Caco-2 (cell line): ENCODE measurements at regions of chr2 and their contacts with region 1.

Region 1: DNA sequence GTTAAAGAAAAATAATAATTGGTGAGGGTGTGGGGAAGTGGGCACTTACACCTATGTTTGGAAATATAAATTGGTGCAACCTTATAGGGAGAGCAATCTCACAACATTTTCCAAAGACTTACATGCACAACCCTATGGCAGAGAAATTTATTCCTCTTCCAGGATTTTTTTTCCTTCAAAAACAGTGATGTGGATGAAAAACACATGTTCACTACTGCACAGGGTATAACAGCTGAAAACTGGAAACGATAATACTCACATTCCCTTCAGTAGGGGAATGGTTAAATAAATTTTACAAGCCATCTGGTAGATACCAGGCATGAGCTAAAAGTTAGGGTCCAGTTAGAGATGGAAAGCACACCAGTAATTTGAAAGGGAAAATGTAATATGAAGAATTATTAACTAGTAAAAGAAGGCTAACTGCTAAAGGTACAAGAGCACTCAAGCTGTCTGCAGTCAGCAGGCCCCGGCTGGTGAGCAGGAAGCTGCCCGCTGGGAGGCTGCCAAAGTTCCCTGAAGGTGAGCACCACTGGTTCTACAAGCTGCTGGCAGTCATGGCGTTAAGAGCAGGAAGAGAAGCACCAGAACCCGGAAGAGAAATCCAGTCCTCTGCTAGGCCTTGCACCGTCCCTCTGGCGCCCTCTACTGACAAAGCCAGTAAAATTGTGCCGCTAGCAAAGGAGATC is 28.4 kb upstream of the CASP8 start:
- DNase-seq: peak; percentile 94 to 95
- H3K4me3 ChIP-seq: no peak overlapping the region
- H3K4me3 Mint-ChIP-seq: peak overlapping the region; percentile 98
- H3K27ac Mint-ChIP-seq: peak overlapping the region; percentile 70
- H3K4me1 ChIP-seq: peaks cover 6% of the 10 kb centered on the region
- H3K4me1 Mint-ChIP-seq: peaks cover 11% of the 10 kb centered on the region
- H3K27me3 ChIP-seq: no peaks in the 10 kb centered on the region
- H3K27me3 Mint-ChIP-seq: no peaks in the 10 kb centered on the region
- CTCF ChIP-seq: peak; percentile 91 to 93

Region 2: DNA sequence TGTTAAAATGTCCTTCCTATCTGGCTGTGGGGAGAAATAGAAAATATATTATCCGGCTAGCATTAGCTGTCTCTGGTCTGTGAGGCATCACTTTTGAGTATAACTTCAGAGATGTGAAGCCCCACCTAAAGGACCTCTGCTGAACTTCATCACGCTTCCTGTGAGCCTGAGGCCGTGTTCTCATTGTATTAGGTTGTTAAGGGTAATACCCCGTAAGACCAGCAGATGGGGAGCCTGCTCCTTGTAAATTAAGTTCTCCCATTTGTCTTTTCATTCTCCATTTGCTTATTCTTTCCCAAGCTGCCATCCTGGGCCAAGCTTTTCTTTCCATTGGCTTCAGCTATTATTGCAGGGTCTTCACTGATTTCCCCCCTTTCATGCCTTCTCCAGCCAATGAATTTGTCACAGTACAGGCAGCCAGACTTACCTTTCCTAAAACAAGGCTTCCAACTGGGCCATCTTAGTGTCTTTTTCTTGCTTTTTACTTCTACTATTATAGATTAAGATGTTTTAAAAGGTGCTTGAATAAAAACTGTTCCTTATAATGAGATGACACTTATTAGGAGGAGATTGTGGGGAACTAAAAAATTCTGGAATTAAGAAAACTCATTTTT is 330.4 kb before region 1 on chr2:
- CTCF ChIA-PET with region 1: interaction called, 6 read pairs
- POLR2A ChIA-PET with region 1: no interaction called
- intact Hi-C with region 1: loop called (anchors 1 kb)
- DNase-seq: peak; percentile 84 to 86
- H3K4me3 ChIP-seq: no peak overlapping the region
- H3K4me3 Mint-ChIP-seq: no peak overlapping the region
- H3K27ac Mint-ChIP-seq: no peak overlapping the region
- H3K4me1 ChIP-seq: no peaks in the 10 kb centered on the region
- H3K4me1 Mint-ChIP-seq: peaks cover 6% of the 10 kb centered on the region
- H3K27me3 ChIP-seq: no peaks in the 10 kb centered on the region
- H3K27me3 Mint-ChIP-seq: no peaks in the 10 kb centered on the region
- CTCF ChIP-seq: peak; percentile 85 to 90

Region 3: DNA sequence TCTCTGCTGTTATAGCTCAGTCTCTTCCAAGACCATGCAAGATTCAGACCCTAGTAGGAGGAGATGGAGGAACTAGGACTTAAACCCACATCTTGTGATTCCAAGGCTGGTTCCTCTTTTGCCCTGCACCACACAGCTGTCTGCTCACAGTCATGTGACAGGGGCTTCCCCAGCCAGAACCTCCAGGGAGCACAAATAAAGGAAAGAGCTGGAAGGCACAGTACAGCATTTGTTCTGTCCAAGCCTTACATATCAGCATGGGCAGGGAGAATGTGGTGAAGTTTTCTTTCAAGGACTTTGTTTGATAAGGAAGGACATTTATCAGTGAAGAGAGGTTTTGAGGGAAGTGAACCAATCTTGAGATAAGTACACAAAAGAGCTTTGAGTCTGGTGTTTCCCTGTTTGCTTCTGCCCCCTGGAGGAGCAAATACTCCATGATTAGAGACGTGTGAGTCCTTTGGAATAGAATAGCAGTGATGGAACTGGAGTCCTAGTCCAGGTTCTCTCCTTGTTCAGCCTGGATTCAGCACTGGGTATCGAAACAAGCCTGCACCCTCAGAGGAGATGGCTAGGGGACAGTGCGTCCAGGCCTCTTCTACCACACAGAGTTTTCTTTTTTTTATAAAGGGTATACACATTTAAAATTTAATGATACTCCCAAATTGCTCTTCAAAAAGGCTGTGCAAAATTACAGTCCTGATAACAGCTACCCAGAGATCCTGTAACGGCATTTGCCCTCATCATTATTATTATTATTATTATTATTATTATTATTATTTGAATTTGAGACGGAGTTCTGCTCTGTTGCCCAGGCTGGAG is 73.6 kb before region 1 on chr2:
- CTCF ChIA-PET with region 1: interaction called, 15 read pairs
- POLR2A ChIA-PET with region 1: interaction called, 3 read pairs
- intact Hi-C with region 1: loop called (anchors 1 kb)
- DNase-seq: peak; percentile 84 to 86
- H3K4me3 ChIP-seq: no peak overlapping the region
- H3K4me3 Mint-ChIP-seq: peak overlapping the region; percentile 40
- H3K27ac Mint-ChIP-seq: peak overlapping the region; percentile 86
- H3K4me1 ChIP-seq: peaks cover 12% of the 10 kb centered on the region
- H3K4me1 Mint-ChIP-seq: peaks cover 13% of the 10 kb centered on the region
- H3K27me3 ChIP-seq: no peaks in the 10 kb centered on the region
- H3K27me3 Mint-ChIP-seq: no peaks in the 10 kb centered on the region
- CTCF ChIP-seq: peak; percentile 71 to 84

Region 4: DNA sequence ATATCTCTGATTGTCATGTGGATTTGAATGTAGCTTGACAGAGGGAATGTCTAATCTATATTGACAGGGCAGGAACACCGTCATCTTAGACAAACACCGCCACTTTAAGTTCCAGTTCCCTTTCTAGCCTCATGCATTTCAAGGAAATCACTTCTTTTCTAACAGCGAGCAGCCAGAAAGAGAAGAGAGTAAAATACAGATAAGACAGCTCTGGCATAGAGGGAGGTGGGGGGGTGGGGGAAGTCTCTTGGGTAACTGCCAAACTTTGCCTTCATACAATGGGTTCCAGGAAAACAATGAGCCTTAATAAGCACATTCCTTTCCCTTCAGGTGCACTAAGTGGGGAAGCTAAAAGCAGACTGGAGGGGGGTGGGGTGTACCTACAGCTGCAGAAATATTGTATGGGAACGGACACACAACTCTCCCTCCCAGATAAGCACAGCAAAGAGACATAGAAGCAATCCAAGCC is 11.8 kb before region 1 on chr2:
- CTCF ChIA-PET with region 1: interaction called, 12 read pairs
- POLR2A ChIA-PET with region 1: interaction called, 4 read pairs
- intact Hi-C with region 1: no loop called
- DNase-seq: no peak
- H3K4me3 ChIP-seq: no peak overlapping the region
- H3K4me3 Mint-ChIP-seq: no peak overlapping the region
- H3K27ac Mint-ChIP-seq: no peak overlapping the region
- H3K4me1 ChIP-seq: peaks cover 7% of the 10 kb centered on the region; the same call in 1 of the 2 replicates
- H3K4me1 Mint-ChIP-seq: no peaks in the 10 kb centered on the region
- H3K27me3 ChIP-seq: no peaks in the 10 kb centered on the region
- H3K27me3 Mint-ChIP-seq: peaks cover 3% of the 10 kb centered on the region
- CTCF ChIP-seq: no peak

Region 5: DNA sequence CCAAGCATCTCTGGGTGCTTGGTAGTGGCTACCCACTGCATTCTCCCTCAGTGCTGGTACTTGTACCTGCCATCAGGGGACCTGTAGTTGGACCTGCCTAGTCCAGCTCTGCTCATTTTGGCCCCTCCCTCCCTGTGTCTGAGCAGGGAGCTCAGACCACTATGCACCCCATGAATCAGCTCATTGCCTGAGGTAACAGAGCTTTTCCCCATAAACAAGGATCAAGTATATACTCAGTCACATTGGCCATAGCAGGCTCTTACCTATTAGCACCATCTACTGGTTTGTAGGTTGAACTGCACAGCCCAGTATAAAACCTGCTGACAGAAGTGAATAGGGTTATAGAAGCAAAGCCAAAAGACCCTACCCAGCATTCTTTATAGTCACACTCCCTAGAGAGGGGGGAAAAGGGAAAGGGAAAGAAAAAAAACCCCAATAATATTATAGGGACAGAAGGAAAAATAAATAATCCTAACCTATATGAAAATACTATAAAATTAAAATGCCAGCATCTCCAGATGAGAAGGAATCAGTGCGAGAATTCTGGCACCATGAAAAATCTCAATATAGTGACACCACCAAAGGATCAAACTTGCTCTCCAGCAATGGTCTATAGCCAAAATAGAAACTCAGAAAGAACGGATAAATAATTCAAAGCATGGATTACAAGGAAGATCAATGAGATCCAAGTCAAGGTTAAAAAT is 132.1 kb after region 1 on chr2:
- CTCF ChIA-PET with region 1: interaction called, 8 read pairs
- POLR2A ChIA-PET with region 1: no interaction called
- intact Hi-C with region 1: loop called (anchors 1 kb)
- DNase-seq: peak in 1 of 2 experiments; percentile 40
- H3K4me3 ChIP-seq: no peak overlapping the region
- H3K4me3 Mint-ChIP-seq: no peak overlapping the region
- H3K27ac Mint-ChIP-seq: no peak overlapping the region
- H3K4me1 ChIP-seq: no peaks in the 10 kb centered on the region
- H3K4me1 Mint-ChIP-seq: no peaks in the 10 kb centered on the region
- H3K27me3 ChIP-seq: no peaks in the 10 kb centered on the region
- H3K27me3 Mint-ChIP-seq: no peaks in the 10 kb centered on the region
- CTCF ChIP-seq: peak; percentile 76 to 78

Region 6: DNA sequence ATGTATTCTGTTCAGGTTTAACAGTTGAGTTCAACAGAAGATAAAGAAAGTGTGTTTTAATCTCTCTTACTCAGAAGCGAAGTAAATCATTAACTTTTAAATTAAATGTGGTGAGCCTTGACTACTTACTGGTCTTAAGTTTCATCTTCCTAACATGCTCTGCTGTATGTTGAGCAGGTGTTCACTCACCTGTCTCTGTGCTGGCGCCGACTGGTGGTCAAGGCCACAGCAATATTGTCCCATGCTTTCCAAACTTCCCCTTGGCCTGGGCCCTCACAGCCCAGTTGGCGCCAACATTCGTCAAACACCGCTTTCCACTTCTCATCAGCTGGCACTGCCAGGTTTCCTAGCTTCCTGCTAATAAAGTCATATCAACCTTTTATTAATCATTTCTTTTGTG is 483.6 kb after region 1 on chr2:
- CTCF ChIA-PET with region 1: no interaction called
- POLR2A ChIA-PET with region 1: no interaction called
- intact Hi-C with region 1: loop called (anchors 1 kb)
- DNase-seq: peak; percentile 64 to 66
- H3K4me3 ChIP-seq: no peak overlapping the region
- H3K4me3 Mint-ChIP-seq: no peak overlapping the region
- H3K27ac Mint-ChIP-seq: no peak overlapping the region
- H3K4me1 ChIP-seq: peaks cover 7% of the 10 kb centered on the region; the same call in 1 of the 2 replicates
- H3K4me1 Mint-ChIP-seq: peaks cover 8% of the 10 kb centered on the region
- H3K27me3 ChIP-seq: no peaks in the 10 kb centered on the region
- H3K27me3 Mint-ChIP-seq: no peaks in the 10 kb centered on the region
- CTCF ChIP-seq: peak; percentile 51 to 61

Region 7: GRCh38 chr2:202149155-202149762 is 917.3 kb after region 1 on chr2:
- CTCF ChIA-PET with region 1: no interaction called
- POLR2A ChIA-PET with region 1: no interaction called
- intact Hi-C with region 1: no loop called
- DNase-seq: no peak
- H3K4me3 ChIP-seq: no peak overlapping the region
- H3K4me3 Mint-ChIP-seq: no peak overlapping the region
- H3K27ac Mint-ChIP-seq: no peak overlapping the region
- H3K4me1 ChIP-seq: peaks cover 3% of the 10 kb centered on the region; the same call in 1 of the 2 replicates
- H3K4me1 Mint-ChIP-seq: peaks cover 7% of the 10 kb centered on the region
- H3K27me3 ChIP-seq: no peaks in the 10 kb centered on the region
- H3K27me3 Mint-ChIP-seq: no peaks in the 10 kb centered on the region
- CTCF ChIP-seq: no peak